ENCODE measurements at regions of chr15 and their contacts with region 1.

Region 1: DNA sequence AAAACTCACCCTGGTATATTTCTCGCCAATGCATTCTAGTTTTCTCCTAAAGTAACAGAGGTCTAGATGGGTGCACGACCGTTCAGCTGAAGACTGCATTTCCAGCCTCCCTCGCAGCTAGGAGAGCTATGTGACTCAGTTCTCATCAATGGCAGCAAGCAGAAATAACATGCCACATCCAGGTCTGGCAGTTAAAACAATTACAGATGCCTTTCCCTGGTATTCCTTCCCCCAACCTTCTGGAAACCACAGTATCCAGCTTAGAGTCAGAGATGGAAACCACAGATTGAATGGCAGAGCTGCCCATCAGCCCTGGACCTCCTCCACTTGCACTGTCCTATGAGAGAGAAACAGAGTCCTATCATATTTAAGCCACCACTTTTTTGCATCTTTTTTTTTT is 4.8 kb downstream of the HAPLN3 start:
- DNase-seq: no peak
- H3K4me3 ChIP-seq: no peak overlapping the region
- H3K27ac ChIP-seq: no peak overlapping the region
- H3K4me1 ChIP-seq: peaks cover 0 to 16% (median 12%) of the 10 kb centered on the region in 4 experiments
- H3K27me3 ChIP-seq: peaks cover 2 to 16% (median 6%) of the 10 kb centered on the region in 5 experiments

Region 2: GRCh38 chr15:88878720-88879184 is 11.7 kb before region 1 on chr15:
- CTCF ChIA-PET with region 1: interaction called, 15 read pairs
- POLR2A ChIA-PET with region 1: no interaction called
- DNase-seq: peak; percentile 19 to 57 (median 56)
- H3K4me3 ChIP-seq: no peak overlapping the region
- H3K27ac ChIP-seq: no peak overlapping the region
- H3K4me1 ChIP-seq: no peaks in the 10 kb centered on the region
- H3K27me3 ChIP-seq: peaks cover 0 to 2% (median 0%) of the 10 kb centered on the region in 5 experiments